Activated CD4-positive, alpha-beta T cell treated with anti-CD3 and anti-CD28 coated beads, Interleukin-2, amount 10 ng/mL, durations not matched to agents 24 days and 14 days (primary cell): ENCODE measurements at regions of chr2 and their contacts with region 1.

Region 1: DNA sequence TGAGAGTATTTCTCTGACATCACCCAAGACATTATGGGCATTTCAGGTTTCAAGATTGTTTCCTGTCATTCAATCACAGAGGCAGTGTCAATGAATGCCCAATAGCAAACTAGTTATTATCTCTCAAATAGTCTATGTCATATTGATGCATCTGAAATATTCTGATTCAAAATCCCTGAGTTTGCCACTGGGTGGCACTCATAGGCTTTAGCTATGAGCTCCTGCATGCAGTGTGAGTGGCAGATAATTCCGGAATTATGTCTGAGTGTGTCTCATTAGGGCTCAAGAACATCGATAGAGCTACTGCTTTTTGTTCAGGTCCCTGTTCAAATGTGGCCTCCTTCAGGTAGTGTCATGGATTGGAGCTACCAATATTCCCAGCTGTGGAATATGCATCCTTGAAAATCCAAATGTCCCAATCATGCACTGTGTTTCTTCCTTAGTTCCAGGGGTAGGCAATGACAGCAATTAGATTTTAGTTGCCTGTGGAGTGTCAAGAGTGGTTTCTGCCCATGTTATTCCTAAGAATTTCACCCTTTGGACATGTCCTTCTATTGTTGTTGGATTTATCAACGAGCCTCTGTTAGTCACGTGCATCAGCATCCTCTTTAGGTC is 7.8 kb upstream of the OR6B3 start:
- DNase-seq: peak; percentile 84
- H3K4me3 Mint-ChIP-seq: no peak overlapping the region
- H3K27ac Mint-ChIP-seq: no peak overlapping the region
- H3K4me1 Mint-ChIP-seq: no peaks in the 10 kb centered on the region
- H3K27me3 Mint-ChIP-seq: peaks cover 24% of the 10 kb centered on the region

Region 2: DNA sequence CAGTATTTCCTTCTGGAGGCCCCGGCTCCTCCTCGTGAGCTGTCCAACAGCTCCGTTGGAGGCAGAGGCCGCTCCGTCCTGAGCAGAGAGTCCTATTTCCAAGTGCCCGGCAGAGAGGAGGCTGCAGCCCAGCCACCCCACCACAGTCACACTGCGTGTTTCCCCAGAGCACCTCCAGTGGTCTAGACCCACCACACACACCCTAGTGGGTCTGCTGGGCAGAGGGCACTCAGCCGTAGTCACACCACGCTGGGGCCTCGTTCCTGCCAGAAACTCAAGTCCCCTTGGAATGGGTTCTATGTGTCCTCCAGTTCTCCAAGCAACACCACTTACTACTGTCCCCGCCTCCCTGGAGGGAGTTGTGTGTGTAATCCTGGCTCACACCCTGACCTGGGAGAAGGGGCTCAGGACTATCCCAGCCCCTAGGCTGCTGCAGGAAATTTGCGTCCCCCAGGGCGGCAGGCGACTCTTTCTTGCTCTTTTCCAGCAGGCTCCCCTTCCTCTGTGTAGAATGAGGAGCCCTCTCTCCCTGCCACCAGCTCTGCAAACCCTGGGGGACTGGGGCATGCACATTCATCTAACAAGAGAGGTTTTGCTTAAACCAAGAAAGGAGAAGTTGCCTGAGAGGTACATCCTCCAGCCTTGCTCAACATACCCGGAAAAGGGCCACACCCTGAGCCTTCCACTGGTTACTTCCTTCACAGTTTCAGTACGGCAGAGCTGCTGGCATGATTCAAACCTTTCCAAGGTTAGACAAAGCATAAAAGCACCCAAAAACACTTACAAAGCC is 150.0 kb before region 1 on chr2:
- intact Hi-C with region 1: no loop called
- DNase-seq: peak; percentile 78
- H3K4me3 Mint-ChIP-seq: peak overlapping the region; percentile 58
- H3K27ac Mint-ChIP-seq: peak overlapping the region; percentile 76
- H3K4me1 Mint-ChIP-seq: peaks cover 13% of the 10 kb centered on the region
- H3K27me3 Mint-ChIP-seq: no peaks in the 10 kb centered on the region

Region 3: DNA sequence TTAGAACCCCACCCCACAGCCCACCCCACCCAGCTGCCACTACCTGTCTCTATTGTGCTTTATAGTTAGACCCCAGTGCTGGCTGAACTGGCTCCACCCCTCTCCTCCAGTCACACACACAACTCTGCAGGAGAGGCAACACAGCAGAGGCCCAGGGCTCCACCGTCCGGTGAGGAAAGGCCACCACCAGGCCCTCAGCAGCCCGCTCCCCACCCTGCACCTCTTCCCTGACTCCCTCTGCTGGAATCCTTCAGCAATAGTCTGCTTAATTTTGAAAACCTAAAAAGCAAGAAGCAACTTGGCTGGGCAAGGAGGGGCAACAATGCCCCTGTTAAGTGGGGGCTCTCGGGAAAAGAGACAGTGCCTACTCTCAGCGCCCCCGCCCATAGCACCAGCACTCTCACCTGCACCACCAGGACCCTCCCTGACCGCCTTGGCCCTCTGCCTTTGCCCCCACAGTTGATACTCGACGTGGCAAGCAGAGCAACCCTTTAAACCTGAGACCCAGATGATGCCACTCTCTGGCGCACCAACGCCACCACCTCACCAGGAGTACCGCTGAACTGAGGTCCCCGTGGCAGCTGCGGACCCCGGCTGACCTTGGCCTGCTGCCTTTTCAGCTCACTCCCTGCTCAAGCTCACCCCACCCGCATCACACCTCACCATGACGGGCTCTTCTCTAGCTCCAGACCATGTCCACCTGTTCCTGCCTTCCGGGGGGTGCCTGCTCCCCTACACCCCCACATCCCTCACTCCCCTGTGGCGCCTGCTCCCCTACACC is 81.7 kb before region 1 on chr2:
- intact Hi-C with region 1: no loop called
- DNase-seq: no peak
- H3K4me3 Mint-ChIP-seq: no peak overlapping the region
- H3K27ac Mint-ChIP-seq: no peak overlapping the region
- H3K4me1 Mint-ChIP-seq: peaks cover 2% of the 10 kb centered on the region
- H3K27me3 Mint-ChIP-seq: no peaks in the 10 kb centered on the region

Region 4: DNA sequence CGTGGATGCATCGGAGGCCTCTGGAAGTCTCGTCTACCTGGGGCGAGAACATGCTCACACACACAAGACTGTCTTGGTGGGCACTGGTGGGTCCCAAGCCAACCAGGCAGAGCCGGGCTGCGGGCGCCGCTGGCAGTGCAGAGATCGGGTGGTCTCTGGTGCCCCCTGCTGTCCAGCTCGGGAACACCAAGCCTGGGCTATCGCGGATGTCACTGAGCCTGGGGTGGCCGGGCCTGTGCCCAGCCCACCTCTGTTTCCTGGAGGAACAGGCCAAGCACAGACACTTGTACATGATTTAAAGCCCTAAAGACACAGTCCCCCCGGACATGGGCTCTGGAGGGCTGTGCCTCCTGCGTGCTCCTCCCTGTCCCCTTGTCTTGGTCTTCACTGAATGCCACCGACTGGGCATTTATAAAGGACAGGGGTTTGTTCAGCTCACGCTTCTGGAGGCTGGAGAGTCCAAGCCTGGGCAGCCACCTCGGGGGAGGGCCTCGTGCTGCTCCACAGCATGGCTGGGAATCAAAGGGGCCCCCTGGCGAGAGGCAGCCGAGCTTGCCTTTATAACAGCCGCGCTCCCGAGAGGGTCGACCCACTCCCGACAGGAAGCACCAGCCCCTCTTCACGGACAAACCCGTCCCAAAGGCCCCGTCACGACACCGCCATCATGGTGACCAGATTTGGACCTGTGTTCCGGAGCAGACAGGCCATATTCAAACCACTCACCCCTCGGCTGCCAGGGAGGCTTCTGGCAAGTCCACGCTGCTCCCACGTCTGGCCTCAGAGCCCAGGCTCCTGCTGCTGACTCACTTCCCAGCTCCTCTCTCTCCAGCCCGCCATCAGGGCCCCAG is 82.9 kb after region 1 on chr2:
- intact Hi-C with region 1: loop called (anchors 1 kb)
- DNase-seq: peak; percentile 94
- H3K4me3 Mint-ChIP-seq: no peak overlapping the region
- H3K27ac Mint-ChIP-seq: no peak overlapping the region
- H3K4me1 Mint-ChIP-seq: no peaks in the 10 kb centered on the region
- H3K27me3 Mint-ChIP-seq: no peaks in the 10 kb centered on the region